Activated CD4-positive, alpha-beta memory T cell treated with anti-CD3 and anti-CD28 coated beads for 36 hours (primary cell): ENCODE measurements at regions of chr15 and their contacts with region 1.

Region 1: GRCh38 chr15:74635228-74635627 is 19.6 kb downstream of the CLK3 start:
- DNase-seq: peak; percentile 84
- H3K4me3 Mint-ChIP-seq: no peak overlapping the region
- H3K27ac Mint-ChIP-seq: no peak overlapping the region
- H3K4me1 Mint-ChIP-seq: no peaks in the 10 kb centered on the region
- H3K27me3 Mint-ChIP-seq: no peaks in the 10 kb centered on the region

Region 2: DNA sequence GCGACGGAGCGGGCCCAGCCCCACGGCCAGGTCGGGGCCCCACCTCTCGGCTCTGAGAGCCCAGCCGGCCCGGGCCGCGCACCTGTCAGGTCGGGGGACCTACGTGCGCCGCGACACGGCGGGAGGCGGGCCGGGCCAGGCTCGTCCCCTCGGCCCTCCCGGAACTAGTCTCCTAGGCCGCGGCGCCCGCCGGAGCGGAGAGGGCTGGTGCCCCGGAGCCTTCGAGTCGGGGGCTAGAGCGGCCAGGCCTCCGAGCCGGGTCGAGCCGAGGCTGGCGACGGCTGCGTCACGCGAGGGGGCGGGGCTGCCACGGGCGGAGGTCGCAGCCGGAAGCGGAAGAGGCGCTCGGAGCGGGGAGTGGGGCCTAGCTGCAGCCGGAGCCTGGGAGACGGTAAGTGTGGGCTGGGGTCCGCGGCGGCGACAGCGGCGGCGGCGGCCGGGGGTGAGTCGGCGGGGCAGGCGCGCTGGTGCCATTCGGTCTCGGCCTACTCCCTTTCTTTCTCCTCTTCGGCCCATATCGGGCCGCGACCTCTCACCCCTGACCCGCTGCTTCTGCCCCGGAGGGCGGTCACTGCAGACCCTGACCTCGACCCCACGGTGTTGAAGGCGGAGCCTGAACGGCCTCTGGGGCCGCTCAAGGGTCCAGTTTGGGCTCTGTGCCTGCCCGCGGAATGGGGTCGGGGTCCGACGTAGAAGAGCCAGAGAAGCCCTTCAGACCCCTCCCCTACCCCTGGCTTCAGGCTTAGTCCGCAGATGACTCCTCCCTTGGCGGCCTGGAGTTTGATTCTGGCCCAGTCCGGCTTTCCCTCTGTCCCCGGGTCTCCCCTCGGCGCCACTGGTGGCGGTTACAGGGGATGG is 19.5 kb before region 1 on chr15 and contains the start of gene CLK3:
- CTCF ChIA-PET with region 1: interaction called, 214 read pairs
- POLR2A ChIA-PET with region 1: interaction called, 6 read pairs
- intact Hi-C with region 1: no loop called
- DNase-seq: peak; percentile 97
- H3K4me3 Mint-ChIP-seq: peak within 1 kb of the TSS; percentile 91
- H3K27ac Mint-ChIP-seq: peak within 1 kb of the TSS; percentile 94
- H3K4me1 Mint-ChIP-seq: peaks cover 35% of the 10 kb centered on the region
- H3K27me3 Mint-ChIP-seq: no peaks in the 10 kb centered on the region
- total RNA-seq, gene CLK3: 118 to 124 TPM

Region 3: GRCh38 chr15:74695597-74696397 is 60.6 kb after region 1 on chr15 and contains the start of gene EDC3:
- CTCF ChIA-PET with region 1: interaction called, 10 read pairs
- POLR2A ChIA-PET with region 1: no interaction called
- intact Hi-C with region 1: no loop called
- DNase-seq: peak; percentile 90
- H3K4me3 Mint-ChIP-seq: peak within 1 kb of the TSS; percentile 100
- H3K27ac Mint-ChIP-seq: peak within 1 kb of the TSS; percentile 93
- H3K4me1 Mint-ChIP-seq: peaks cover 38% of the 10 kb centered on the region
- H3K27me3 Mint-ChIP-seq: no peaks in the 10 kb centered on the region
- total RNA-seq, gene EDC3: 36.8 to 39.9 TPM

Region 4: DNA sequence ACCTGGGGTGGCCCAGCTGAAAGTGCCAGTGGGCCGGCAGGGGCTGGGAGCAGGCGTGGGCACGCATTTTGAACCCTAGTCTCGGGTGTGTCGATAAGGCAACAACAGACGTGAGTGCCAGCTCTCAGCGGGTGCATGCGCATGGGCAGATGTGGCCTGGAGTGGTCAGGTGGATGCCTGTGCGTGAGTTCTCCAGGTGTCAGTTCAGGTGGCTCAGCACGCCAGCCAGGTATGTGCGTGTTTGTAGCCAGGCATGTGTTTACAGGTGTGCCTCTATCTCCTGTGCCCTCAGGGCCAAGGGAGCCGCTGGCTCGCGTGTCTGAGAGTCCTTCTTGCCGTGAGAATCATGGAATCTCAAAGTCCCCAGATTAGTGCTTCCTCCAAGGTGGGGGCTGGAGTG is 128.2 kb after region 1 on chr15:
- CTCF ChIA-PET with region 1: interaction called, 434 read pairs
- POLR2A ChIA-PET with region 1: interaction called, 3 read pairs
- intact Hi-C with region 1: no loop called
- DNase-seq: no peak
- H3K4me3 Mint-ChIP-seq: no peak overlapping the region
- H3K27ac Mint-ChIP-seq: no peak overlapping the region
- H3K4me1 Mint-ChIP-seq: no peaks in the 10 kb centered on the region
- H3K27me3 Mint-ChIP-seq: peaks cover 4% of the 10 kb centered on the region

Region 5: DNA sequence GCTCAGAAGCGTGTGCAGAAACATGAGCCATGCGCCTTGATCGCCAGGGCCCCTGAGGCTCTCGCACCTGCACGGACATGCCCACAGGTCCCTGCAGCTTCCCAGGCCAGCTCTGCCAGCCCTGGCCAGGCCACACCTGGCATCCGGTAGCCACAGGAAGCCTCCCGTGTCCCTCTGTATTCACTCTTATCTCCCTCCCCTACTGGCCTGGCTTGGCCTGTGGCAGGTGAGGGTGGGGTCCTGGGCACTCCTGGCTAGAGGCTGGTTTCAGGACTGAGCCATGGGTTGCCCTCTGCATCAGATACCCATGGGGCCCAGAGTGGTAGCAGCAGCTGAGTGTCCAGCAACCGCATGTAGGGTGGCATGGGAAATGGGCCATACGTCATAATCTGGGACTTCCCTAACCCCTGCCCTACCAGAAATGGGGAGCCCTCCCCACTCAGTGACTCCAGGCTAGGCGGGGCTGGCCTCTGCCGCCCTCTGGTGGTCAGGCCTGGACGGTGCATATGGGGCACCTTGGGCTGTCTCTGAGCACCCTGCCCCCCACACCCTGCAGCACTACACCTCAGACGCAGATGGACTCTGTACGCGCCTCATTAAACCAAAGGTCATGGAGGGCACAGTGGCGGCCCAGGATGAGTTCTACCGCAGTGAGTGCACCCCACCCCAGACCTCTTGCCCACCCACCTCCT is 164.8 kb after region 1 on chr15:
- CTCF ChIA-PET with region 1: interaction called, 22 read pairs
- POLR2A ChIA-PET with region 1: no interaction called
- intact Hi-C with region 1: loop called (anchors 1 kb)
- DNase-seq: peak; percentile 93
- H3K4me3 Mint-ChIP-seq: no peak overlapping the region
- H3K27ac Mint-ChIP-seq: peak overlapping the region; percentile 91
- H3K4me1 Mint-ChIP-seq: peaks cover 49% of the 10 kb centered on the region
- H3K27me3 Mint-ChIP-seq: no peaks in the 10 kb centered on the region